CD4-positive, alpha-beta T cell (primary cell): ENCODE measurements at regions of chr1 and their contacts with region 1.

Region 1: DNA sequence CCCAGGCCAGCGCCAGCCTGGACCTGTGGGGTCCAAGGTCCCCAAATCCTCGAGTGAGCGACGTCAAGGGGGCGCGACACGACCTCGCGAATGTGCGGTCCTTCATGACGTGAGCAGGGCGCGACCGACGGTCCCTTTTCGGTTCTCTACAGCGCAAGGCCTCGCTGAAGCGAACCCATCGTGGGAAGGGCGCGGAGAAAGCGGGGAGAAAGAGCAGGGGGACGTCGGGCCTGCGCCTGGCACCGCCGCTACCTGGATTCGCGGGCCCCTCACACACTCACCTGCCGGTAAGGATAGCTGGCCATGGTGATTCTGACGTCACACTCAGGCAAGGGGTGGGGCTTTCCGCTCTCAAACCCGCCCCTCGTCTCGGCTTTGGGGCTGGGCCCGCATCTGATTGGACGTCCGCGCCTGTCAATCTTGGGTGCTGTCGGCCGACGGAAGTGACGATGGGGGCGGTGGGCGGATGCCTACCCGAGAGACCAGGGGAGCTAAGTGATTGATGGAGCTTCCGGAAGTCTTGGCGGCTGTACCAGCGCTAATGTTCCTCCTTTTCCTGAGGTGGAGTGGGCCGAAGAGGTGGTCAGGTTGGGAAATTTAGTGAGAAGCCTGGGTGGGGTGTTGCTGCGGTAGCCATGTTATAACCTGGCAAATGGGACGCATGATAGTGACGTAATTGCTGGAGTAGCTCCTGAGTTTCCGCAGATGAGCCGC is at the start of gene PEF1:
- DNase-seq: peak; percentile 98 to 100 (median 99)
- ATAC-seq: peak; percentile 89
- H3K4me3 ChIP-seq: peak within 1 kb of the TSS; percentile 85
- H3K4me3 Mint-ChIP-seq: peak within 1 kb of the TSS; percentile 99
- H3K27ac ChIP-seq: peak within 1 kb of the TSS; percentile 99
- H3K27ac Mint-ChIP-seq: peak within 1 kb of the TSS; percentile 100
- H3K4me1 ChIP-seq: peaks cover 52% of the 10 kb centered on the region
- H3K4me1 Mint-ChIP-seq: peaks cover 29% of the 10 kb centered on the region
- H3K27me3 ChIP-seq: no peaks in the 10 kb centered on the region
- H3K27me3 Mint-ChIP-seq: no peaks in the 10 kb centered on the region
- CTCF ChIP-seq: no peak
- total RNA-seq, gene PEF1: 42.3 to 45.9 TPM

Region 2: DNA sequence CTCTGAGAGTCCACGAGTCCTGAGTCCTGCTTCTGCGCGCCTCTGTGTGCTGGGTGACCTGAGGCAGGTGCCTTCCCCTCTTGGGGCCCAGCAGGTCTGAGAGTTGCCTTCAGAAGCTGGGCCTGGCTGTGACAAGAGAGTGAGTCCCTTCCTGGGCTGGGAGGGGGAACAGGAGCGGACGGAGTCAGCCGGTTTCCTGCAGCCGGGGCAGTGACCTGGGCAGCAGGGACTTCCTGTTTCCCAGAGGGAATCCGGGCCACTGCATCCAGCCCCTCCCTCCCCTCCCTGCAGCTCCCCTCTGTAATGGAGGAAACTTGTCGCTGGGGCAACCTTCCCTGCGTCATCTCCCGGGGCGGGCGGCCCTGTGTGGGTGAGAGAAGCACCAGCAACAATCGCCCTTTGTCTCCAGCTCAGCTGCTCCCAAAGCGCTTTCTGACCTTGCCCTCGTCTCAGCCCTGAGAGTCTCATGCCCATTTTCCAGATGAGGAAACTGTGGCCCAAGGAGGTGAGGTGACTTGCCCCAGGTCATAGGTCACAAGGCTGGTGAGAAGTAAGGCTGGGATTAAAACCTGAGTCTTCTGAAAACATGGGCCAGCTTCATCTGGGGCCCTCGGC is 797.3 kb before region 1 on chr1:
- CTCF ChIA-PET with region 1: no interaction called
- POLR2A ChIA-PET with region 1: no interaction called
- intact Hi-C with region 1: no loop called
- DNase-seq: peak in 2 of 14 experiments; percentile 12 to 39
- ATAC-seq: no peak
- H3K4me3 ChIP-seq: no peak overlapping the region
- H3K4me3 Mint-ChIP-seq: no peak overlapping the region
- H3K27ac ChIP-seq: no peak overlapping the region
- H3K27ac Mint-ChIP-seq: no peak overlapping the region
- H3K4me1 ChIP-seq: no peaks in the 10 kb centered on the region
- H3K4me1 Mint-ChIP-seq: no peaks in the 10 kb centered on the region
- H3K27me3 ChIP-seq: peaks cover 34 to 46% of the 10 kb centered on the region in 2 experiments
- H3K27me3 Mint-ChIP-seq: peaks cover 66% of the 10 kb centered on the region
- CTCF ChIP-seq: no peak

Region 3: GRCh38 chr1:31296486-31297276 is 348.0 kb before region 1 on chr1 and contains the starts of genes SNRNP40 and ZCCHC17:
- CTCF ChIA-PET with region 1: no interaction called
- POLR2A ChIA-PET with region 1: interaction called, 5 read pairs
- intact Hi-C with region 1: loop called in 1 of 2 experiments (anchors 10 kb)
- DNase-seq: peak; percentile 84 to 99 (median 90)
- ATAC-seq: peak; percentile 94
- H3K4me3 ChIP-seq: peak within 1 kb of the TSS; percentile 90
- H3K4me3 Mint-ChIP-seq: no peak within 1 kb of the TSS
- H3K27ac ChIP-seq: peak within 1 kb of the TSS; percentile 83 to 91
- H3K27ac Mint-ChIP-seq: no peak within 1 kb of the TSS
- H3K4me1 ChIP-seq: peaks cover 41% of the 10 kb centered on the region
- H3K4me1 Mint-ChIP-seq: peaks cover 13% of the 10 kb centered on the region
- H3K27me3 ChIP-seq: no peaks in the 10 kb centered on the region
- H3K27me3 Mint-ChIP-seq: no peaks in the 10 kb centered on the region
- CTCF ChIP-seq: no peak
- total RNA-seq, gene SNRNP40: 48.4 to 53.7 TPM
- total RNA-seq, gene ZCCHC17: 7.3 to 7.6 TPM

Region 4: GRCh38 chr1:32072622-32073298 is 428.0 kb after region 1 on chr1 and contains the start of gene TMEM39B:
- CTCF ChIA-PET with region 1: no interaction called
- POLR2A ChIA-PET with region 1: interaction called, 12 read pairs
- intact Hi-C with region 1: loop called in 1 of 2 experiments (anchors 10 kb)
- DNase-seq: peak; percentile 86 to 98 (median 92)
- ATAC-seq: peak; percentile 84
- H3K4me3 ChIP-seq: peak within 1 kb of the TSS; percentile 71
- H3K4me3 Mint-ChIP-seq: peak within 1 kb of the TSS; percentile 89
- H3K27ac ChIP-seq: peak within 1 kb of the TSS; percentile 50 to 68
- H3K27ac Mint-ChIP-seq: peak within 1 kb of the TSS; percentile 82
- H3K4me1 ChIP-seq: peaks cover 27% of the 10 kb centered on the region
- H3K4me1 Mint-ChIP-seq: peaks cover 39% of the 10 kb centered on the region
- H3K27me3 ChIP-seq: no peaks in the 10 kb centered on the region
- H3K27me3 Mint-ChIP-seq: no peaks in the 10 kb centered on the region
- CTCF ChIP-seq: no peak
- total RNA-seq, gene TMEM39B: 7.2 to 7.9 TPM

Region 5: DNA sequence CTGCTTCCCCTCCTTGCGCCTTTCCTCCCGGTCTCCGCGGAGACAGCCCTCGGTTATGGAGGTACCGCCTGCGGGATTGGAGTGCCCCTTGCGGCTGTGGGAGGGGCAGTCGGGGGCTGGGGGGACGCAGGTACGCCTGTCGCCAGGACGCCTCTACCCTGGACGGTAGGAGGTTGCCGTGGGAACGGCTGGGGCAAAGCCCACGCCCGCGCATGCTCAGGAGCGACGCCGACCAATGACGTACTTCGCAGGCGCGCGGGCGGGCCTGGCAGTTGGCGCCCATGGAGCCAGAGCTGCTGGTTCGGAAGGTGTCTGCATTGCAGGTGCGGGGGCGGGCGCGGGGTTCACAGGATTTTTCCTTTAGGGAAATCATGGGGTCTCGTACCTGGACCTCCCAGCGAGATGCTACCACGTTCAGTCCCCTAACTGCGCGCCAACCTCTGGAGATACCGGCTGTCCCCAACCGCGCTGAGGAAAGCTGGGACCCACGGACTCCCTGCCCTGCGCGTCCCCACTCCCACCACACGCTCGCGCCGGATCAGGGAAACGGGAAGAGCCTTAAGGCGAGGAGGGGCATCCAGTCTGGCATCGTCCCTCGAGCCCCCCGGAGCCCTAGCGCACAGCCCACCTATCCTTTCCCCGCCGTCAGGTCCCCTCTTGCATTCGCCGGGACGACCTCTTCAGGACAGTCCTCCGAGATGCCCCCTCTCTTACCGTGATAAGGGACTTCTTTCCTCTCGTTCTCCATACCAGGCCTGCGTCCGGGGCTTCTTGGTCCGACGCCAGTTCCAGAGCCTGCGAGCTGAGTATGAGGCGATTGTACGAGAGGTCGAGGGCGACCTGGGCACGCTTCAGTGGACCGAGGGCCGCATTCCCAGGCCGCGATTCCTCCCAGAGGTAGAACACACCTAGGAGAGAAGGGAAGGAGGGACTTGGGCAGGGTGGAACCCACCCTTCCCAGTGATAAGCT is 561.0 kb after region 1 on chr1 and contains the start of gene IQCC:
- CTCF ChIA-PET with region 1: interaction called, 3 read pairs
- POLR2A ChIA-PET with region 1: no interaction called
- intact Hi-C with region 1: loop called in 1 of 2 experiments (anchors 10 kb)
- DNase-seq: peak; percentile 72 to 95 (median 81)
- ATAC-seq: peak; percentile 59
- H3K4me3 ChIP-seq: peak within 1 kb of the TSS; percentile 90
- H3K4me3 Mint-ChIP-seq: peak within 1 kb of the TSS; percentile 91
- H3K27ac ChIP-seq: peak within 1 kb of the TSS; percentile 33 to 49
- H3K27ac Mint-ChIP-seq: peak within 1 kb of the TSS; percentile 87
- H3K4me1 ChIP-seq: peaks cover 55% of the 10 kb centered on the region
- H3K4me1 Mint-ChIP-seq: peaks cover 38% of the 10 kb centered on the region
- H3K27me3 ChIP-seq: no peaks in the 10 kb centered on the region
- H3K27me3 Mint-ChIP-seq: no peaks in the 10 kb centered on the region
- CTCF ChIP-seq: no peak
- total RNA-seq, gene IQCC: 2.4 to 3.2 TPM

Region 6: DNA sequence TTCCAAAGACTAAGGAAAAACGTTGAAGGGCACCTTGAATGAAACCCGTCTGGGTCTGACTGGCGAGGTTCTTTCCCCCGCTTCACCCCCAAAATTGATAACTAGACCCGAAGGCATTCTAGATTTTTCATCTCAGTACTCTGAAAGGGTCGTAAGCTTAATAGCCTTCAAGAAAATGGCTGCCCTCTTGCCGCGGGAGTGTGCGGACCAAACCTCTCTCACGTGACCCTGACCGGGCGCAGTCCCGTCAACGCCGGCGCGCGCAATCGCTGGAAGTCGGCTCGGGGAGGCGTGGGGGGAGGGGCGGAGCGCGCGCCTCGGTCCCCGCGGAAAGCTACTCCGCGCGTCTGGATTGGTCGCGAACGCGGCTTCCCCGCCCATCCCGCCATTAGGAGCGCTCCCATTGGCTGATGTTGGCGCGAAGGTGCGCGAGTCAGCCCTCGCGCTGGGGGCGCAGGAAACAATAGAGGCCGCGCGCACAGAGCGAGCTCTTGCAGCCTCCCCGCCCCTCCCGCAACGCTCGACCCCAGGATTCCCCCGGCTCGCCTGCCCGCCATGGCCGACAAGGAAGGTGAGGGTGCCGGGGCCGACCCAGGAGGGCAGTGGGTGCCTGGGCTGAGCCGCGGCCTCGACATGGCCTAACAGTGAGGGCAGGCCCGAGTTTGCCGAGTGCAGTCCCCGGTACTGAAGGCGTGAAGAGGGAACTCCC is 1006.2 kb after region 1 on chr1 and contains the start of gene RBBP4:
- CTCF ChIA-PET with region 1: no interaction called
- POLR2A ChIA-PET with region 1: interaction called, 4 read pairs
- intact Hi-C with region 1: loop called in 1 of 2 experiments (anchors 10 kb)
- DNase-seq: peak; percentile 94 to 99 (median 98)
- ATAC-seq: peak; percentile 79
- H3K4me3 ChIP-seq: peak within 1 kb of the TSS; percentile 80
- H3K4me3 Mint-ChIP-seq: peak within 1 kb of the TSS; percentile 94
- H3K27ac ChIP-seq: peak within 1 kb of the TSS; percentile 98 to 99
- H3K27ac Mint-ChIP-seq: peak within 1 kb of the TSS; percentile 95
- H3K4me1 ChIP-seq: peaks cover 58% of the 10 kb centered on the region
- H3K4me1 Mint-ChIP-seq: peaks cover 66% of the 10 kb centered on the region
- H3K27me3 ChIP-seq: no peaks in the 10 kb centered on the region
- H3K27me3 Mint-ChIP-seq: no peaks in the 10 kb centered on the region
- CTCF ChIP-seq: no peak
- total RNA-seq, gene RBBP4: 108 to 117 TPM

Region 7: GRCh38 chr1:33181921-33182341 is 1537.2 kb after region 1 on chr1 and contains the start of gene TRIM62:
- CTCF ChIA-PET with region 1: no interaction called
- POLR2A ChIA-PET with region 1: no interaction called
- intact Hi-C with region 1: loop called in 1 of 2 experiments (anchors 10 kb)
- DNase-seq: peak; percentile 60 to 89 (median 72)
- ATAC-seq: peak; percentile 71
- H3K4me3 ChIP-seq: peak within 1 kb of the TSS; percentile 88
- H3K4me3 Mint-ChIP-seq: peak within 1 kb of the TSS; percentile 93
- H3K27ac ChIP-seq: peak within 1 kb of the TSS in 1 of 2 donors; percentile 30
- H3K27ac Mint-ChIP-seq: peak within 1 kb of the TSS; percentile 62
- H3K4me1 ChIP-seq: peaks cover 23% of the 10 kb centered on the region
- H3K4me1 Mint-ChIP-seq: peaks cover 34% of the 10 kb centered on the region
- H3K27me3 ChIP-seq: peaks cover 0 to 3% of the 10 kb centered on the region in 2 experiments
- H3K27me3 Mint-ChIP-seq: no peaks in the 10 kb centered on the region
- CTCF ChIP-seq: no peak
- total RNA-seq, gene TRIM62: 18.9 to 23.0 TPM